GM10248 (cell line): ENCODE measurements at regions of chr7 and their contacts with region 1.

Region 1: GRCh38 chr7:3065724-3066143 is 22.1 kb upstream of the CARD11 start:
- DNase-seq: peak; percentile 66
- CTCF ChIP-seq: peak; percentile 70

Region 2: DNA sequence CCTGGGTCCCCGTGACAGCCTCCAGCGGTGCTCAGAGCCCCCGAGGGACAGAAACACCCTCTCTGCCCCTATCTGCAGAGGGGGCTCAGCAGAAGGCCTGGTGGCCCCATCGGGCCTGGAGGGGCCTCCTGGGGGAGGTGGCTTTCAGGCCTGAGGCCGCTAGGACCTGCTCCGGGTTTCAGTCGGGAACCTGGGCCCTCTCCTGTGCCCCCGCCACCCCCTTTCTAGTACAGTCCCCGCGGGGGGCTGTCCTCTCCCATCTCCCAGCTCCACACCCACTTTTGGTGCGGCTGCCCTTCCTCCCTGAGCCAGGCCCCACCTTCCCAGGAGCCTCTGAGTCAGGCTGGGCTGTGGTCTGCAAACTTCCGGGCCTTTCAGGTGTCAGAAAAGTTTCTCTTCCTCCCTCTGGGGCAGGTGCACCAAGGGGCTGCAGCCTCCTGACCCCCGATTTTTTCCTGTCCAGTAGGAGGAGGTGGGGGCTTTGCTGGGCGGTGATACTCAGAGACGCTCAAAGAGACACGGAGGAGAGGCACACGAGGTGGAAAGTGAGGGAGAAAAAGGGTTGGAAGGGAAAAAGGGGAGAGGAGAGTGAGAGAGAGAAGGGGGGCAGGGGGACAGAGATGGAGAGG is 22.8 kb before region 1 on chr7:
- CTCF ChIA-PET with region 1: interaction called, 20 read pairs
- POLR2A ChIA-PET with region 1: no interaction called
- DNase-seq: peak; percentile 79
- CTCF ChIP-seq: no peak

Region 3: GRCh38 chr7:3078514-3078913 is 12.8 kb after region 1 on chr7:
- CTCF ChIA-PET with region 1: interaction called, 55 read pairs
- POLR2A ChIA-PET with region 1: no interaction called
- DNase-seq: no peak
- CTCF ChIP-seq: no peak

Region 4: DNA sequence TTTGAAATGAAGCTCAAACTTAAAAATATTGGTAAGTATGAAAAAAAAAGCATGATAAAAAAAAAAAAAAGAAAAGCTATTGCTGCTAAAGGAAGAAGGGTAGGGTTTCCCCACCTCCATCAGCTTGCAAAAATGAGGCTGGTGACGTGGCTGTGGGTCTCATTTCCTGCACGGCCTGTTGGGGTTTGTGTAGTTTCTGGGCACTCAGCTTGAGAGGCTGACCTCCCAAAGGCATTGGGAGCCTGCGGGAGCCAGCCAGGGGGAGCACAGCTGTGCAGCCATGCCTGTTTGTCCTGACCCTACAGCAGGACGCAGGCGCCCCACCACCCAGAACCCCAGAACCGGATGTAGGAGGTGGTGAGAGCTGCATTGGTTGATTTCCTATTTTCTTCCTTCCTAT is 26.7 kb after region 1 on chr7:
- CTCF ChIA-PET with region 1: interaction called, 30 read pairs
- POLR2A ChIA-PET with region 1: no interaction called
- DNase-seq: peak; percentile 77
- CTCF ChIP-seq: no peak

Region 5: DNA sequence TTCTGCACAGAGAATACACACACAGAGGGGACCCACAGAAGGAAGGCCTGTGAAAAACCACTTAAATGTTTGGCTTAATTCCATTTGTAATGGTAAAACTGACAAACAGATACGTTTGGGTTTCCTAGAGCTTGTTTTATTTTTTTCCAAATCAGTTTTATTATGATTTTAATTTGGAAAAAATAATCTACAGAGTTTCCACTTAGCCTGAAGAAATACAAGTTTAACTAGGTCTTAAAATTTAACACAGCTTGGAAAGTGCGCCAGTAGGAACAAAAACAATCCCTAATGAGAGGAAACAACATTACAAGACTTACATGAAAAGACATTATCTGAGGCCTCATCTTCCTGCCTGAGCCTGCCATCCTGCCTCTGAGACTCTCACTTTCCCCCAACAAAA is 36.4 kb after region 1 on chr7:
- CTCF ChIA-PET with region 1: interaction called, 10 read pairs
- POLR2A ChIA-PET with region 1: no interaction called
- DNase-seq: no peak
- CTCF ChIP-seq: no peak

Region 6: DNA sequence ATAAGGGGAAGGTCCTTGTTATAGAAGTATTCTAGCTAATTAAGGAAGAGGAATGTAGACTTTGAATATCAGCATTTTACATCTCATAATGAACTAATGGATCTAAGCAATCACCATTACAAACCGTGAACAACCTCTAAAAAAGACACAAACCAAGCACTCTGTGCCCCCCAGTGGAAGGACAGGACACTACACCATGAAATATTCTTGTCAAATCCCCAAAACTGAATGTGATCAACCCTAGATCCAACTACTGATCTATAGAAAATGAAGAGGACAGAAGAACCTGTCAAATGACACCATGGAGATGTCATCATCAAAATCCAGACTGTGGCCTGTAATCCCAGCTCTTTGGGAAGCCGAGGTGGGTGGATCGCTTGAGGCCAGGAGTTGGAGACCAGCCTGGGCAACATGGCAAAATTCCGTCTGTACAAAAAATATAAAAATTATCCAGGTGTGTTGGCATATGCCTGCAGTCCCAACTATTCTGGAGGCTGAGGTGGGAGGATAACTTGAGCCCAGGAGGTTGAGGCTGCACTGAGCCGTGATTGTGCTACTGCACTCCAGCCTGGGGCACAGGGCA is 89.3 kb after region 1 on chr7:
- CTCF ChIA-PET with region 1: interaction called, 26 read pairs
- POLR2A ChIA-PET with region 1: no interaction called
- DNase-seq: peak; percentile 68
- CTCF ChIP-seq: peak; percentile 73